Left cardiac atrium (tissue), 4 donors: ENCODE measurements at regions of chr3 and their contacts with region 1.

Region 1: GRCh38 chr3:171328419-171329082 is 131.7 kb downstream of the TNIK start:
- DNase-seq: no peak
- ATAC-seq: peak in 1 of 2 donors; percentile 25

Region 2: DNA sequence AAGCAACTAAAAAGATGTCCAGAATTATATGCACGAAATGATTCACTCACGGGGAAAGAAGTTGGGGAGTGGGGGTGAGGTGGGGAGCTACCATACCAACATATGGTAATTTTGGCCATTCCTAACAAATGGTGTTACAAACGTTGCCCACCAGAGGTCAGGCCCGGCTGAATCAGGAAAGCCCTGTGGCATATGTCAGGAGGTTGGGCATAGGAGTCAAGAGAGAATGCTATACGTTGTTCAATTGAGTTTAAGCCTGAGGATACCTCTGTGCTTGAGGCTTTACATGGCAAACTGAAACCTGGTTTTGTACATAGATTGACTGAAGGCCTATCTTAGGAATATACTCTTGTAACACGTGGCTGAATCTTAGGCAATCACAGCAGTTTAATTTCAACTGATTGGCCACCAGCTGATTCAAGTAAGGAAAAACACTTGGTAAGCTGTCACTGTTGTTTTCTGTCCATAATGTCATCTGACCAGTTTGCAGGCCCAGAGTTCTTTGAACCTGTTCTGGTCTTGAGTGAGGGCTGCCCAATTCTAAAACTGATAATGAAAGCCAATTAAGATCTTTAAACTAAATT is 278.6 kb before region 1 on chr3:
- intact Hi-C with region 1: no loop called
- DNase-seq: peak; percentile 51
- ATAC-seq: peak; percentile 72 to 76

Region 3: GRCh38 chr3:171459942-171460724 is 131.6 kb after region 1 on chr3 and contains the start of gene TNIK:
- intact Hi-C with region 1: loop called in 1 of 2 experiments (anchors 10 kb)
- DNase-seq: peak; percentile 91
- ATAC-seq: peak; percentile 97 to 98
- total RNA-seq, gene TNIK: 13.6 to 16.0 TPM

Region 4: DNA sequence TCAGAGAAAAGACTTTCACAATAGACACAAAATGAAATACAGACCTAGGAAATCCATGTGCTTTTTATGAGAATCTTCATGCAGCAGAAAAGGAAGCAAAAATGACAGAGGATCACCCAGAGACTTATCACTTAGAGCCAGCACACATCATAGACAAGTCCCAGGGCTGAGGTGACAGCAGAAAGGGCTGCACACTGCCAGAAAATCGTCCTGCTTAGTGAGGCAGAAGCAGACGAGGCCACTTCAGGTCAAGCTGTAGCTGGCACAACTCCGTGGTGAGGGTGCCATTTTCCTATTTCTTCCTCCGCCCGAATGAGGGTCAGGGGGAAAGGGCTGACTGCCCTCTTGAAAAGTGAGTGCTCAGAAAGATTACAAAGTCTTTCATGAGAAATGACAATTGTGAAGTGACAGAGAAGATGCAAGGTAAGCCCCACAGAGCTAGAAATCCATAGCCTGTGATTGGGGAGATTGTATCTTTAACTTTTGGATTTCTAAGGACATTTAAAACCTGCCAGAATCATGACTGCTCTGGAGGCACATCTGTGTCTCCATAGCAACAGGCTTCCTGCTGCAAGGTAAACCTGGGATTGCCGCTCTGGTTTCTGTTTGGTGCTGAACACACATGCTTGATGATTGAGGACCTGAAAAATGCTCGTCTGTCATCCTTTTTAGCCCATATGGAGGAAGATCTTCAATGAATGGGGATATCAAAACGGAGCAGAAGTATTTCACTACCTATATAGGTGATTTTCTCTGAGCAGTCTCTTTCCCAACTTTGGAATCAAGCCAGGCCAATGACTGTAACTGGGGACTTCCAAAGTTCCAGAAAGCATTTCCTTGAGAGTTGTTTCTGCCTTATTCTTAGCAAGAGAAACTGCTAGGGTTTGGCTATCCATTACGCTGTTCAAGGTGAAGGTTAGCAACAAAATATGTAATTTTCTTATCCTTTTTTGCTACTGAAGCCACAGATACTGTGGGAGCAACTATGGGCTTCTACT is 227.9 kb after region 1 on chr3:
- intact Hi-C with region 1: loop called in 1 of 2 experiments (anchors 10 kb)
- DNase-seq: peak; percentile 27
- ATAC-seq: peak; percentile 93 to 95